Caco-2 (cell line): ENCODE measurements at regions of chr12 and their contacts with region 1.

Region 1: GRCh38 chr12:4526923-4527546 is 11.7 kb upstream of the RAD51AP1 start:
- DNase-seq: no peak
- H3K4me3 ChIP-seq: no peak overlapping the region
- H3K4me3 Mint-ChIP-seq: no peak overlapping the region
- H3K27ac Mint-ChIP-seq: no peak overlapping the region
- H3K4me1 ChIP-seq: no peaks in the 10 kb centered on the region
- H3K4me1 Mint-ChIP-seq: no peaks in the 10 kb centered on the region
- H3K27me3 ChIP-seq: no peaks in the 10 kb centered on the region
- H3K27me3 Mint-ChIP-seq: no peaks in the 10 kb centered on the region
- CTCF ChIP-seq: peak; percentile 53 to 75

Region 2: DNA sequence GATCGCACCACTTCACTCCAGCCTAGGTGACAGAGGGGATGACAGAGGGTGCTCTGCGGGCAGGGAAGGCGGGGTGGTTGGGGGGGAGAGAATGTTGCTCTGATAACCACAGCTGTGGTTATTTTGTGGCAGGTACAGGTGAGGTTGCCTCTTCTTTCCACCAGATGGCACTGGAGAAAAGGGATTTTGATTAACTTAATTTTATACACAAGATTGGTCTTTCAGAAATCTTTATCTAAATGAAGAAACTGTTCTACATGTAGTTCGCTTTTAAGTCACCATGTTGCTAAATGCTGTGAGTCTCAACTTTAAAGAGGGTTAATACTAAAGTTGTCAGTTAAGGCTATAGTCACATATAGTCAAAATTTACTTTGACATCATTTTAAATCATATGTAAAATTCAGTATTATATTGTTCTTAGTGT is 173.2 kb before region 1 on chr12:
- CTCF ChIA-PET with region 1: interaction called, 5 read pairs
- POLR2A ChIA-PET with region 1: no interaction called
- intact Hi-C with region 1: loop called (anchors 1 kb)
- DNase-seq: peak in 1 of 2 experiments; percentile 27
- H3K4me3 ChIP-seq: no peak overlapping the region
- H3K4me3 Mint-ChIP-seq: no peak overlapping the region
- H3K27ac Mint-ChIP-seq: no peak overlapping the region
- H3K4me1 ChIP-seq: no peaks in the 10 kb centered on the region
- H3K4me1 Mint-ChIP-seq: no peaks in the 10 kb centered on the region
- H3K27me3 ChIP-seq: no peaks in the 10 kb centered on the region
- H3K27me3 Mint-ChIP-seq: no peaks in the 10 kb centered on the region
- CTCF ChIP-seq: peak; percentile 57 to 67

Region 3: GRCh38 chr12:4421590-4422031 is 105.4 kb before region 1 on chr12:
- CTCF ChIA-PET with region 1: interaction called, 7 read pairs
- POLR2A ChIA-PET with region 1: no interaction called
- intact Hi-C with region 1: loop called (anchors 2 kb)
- DNase-seq: peak in 1 of 2 experiments; percentile 74
- H3K4me3 ChIP-seq: no peak overlapping the region
- H3K4me3 Mint-ChIP-seq: no peak overlapping the region
- H3K27ac Mint-ChIP-seq: no peak overlapping the region
- H3K4me1 ChIP-seq: no peaks in the 10 kb centered on the region
- H3K4me1 Mint-ChIP-seq: no peaks in the 10 kb centered on the region
- H3K27me3 ChIP-seq: peaks cover 1% of the 10 kb centered on the region; the same call in 1 of the 2 replicates
- H3K27me3 Mint-ChIP-seq: peaks cover 18% of the 10 kb centered on the region
- CTCF ChIP-seq: peak; percentile 70 to 93